Activated CD4-positive, alpha-beta memory T cell treated with anti-CD3 and anti-CD28 coated beads, Interleukin-2, amount 10 ng/mL, durations not matched to agents 7 days and 5 days (primary cell): ENCODE measurements at regions of chr2 and their contacts with region 1.

Region 1: DNA sequence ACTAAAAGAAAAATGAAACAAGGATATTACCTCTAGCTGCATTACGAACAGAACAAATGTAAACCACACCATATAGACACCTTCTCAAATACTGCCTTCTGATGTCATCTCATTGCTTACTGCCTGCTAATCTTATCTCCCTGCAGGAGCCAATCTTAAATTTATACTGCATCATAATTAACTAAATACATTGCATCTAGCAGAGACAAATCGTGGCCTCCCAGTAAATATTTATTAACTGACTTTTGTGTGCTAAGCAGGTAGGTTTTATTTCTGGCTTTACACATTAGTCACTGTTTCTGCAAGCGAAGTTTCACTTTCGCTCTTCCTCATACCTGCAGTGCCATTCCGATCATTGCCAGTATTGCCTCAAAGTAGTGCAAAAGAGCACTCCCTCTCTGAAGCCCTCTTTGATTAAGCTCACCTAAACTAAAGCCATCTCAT is 67.5 kb downstream of the SPATS2L start:
- DNase-seq: peak; percentile 53
- H3K4me3 Mint-ChIP-seq: peak overlapping the region; percentile 84
- H3K27ac Mint-ChIP-seq: peak overlapping the region; percentile 95
- H3K4me1 Mint-ChIP-seq: peaks cover 55% of the 10 kb centered on the region
- H3K27me3 Mint-ChIP-seq: no peaks in the 10 kb centered on the region

Region 2: GRCh38 chr2:200223205-200223784 is 150.7 kb before region 1 on chr2:
- CTCF ChIA-PET with region 1: no interaction called
- POLR2A ChIA-PET with region 1: no interaction called
- DNase-seq: no peak
- H3K4me3 Mint-ChIP-seq: no peak overlapping the region
- H3K27ac Mint-ChIP-seq: no peak overlapping the region
- H3K4me1 Mint-ChIP-seq: no peaks in the 10 kb centered on the region
- H3K27me3 Mint-ChIP-seq: peaks cover 18% of the 10 kb centered on the region

Region 3: GRCh38 chr2:200306196-200306930 is 67.6 kb before region 1 on chr2 and contains the start of gene SPATS2L:
- CTCF ChIA-PET with region 1: interaction called, 3 read pairs
- POLR2A ChIA-PET with region 1: interaction called, 34 read pairs
- DNase-seq: peak; percentile 72
- H3K4me3 Mint-ChIP-seq: peak within 1 kb of the TSS; percentile 82
- H3K27ac Mint-ChIP-seq: peak within 1 kb of the TSS; percentile 82
- H3K4me1 Mint-ChIP-seq: peaks cover 44% of the 10 kb centered on the region
- H3K27me3 Mint-ChIP-seq: peaks cover 3% of the 10 kb centered on the region
- total RNA-seq, gene SPATS2L: 79.0 to 82.3 TPM